ENCODE measurements at regions of chr14 and their contacts with region 1.

Region 1: DNA sequence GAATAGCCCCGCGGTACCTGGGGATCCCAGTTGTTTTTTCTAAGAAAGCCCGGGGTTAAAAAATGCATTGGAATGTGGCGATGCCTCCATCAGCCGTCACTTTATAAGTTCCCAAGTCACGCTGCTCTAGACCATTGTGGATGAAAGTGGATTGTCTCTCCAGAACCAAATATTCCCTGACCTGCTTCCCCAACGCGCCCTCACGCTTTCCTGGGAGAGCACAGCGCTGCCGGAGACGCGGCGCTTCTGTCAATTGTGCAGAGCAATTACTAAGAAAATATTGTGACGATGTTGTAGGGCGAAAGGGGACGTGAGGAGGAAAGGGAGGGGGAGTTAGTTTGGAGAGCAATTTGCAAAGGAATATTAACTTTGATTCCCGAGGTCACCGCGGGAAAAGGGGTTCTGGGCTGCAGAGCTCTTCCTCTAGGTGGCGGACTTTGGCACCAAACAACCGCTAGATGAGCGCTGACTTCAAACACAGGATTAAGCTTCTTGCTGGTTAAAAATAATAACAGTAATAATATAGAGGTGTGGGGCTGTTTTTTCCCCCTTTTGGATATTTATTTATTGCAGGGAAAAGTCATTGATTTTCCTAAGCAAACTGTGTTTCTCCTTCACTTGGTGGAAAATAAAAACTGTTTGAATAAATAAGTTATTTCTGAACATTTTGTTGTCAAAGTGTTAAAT is 9.6 kb upstream of the FOXG1 start:
- DNase-seq: no peak
- ATAC-seq: no peak
- H3K4me3 ChIP-seq: no peak overlapping the region
- H3K27ac ChIP-seq: no peak overlapping the region
- H3K4me1 ChIP-seq: no peaks in the 10 kb centered on the region
- H3K27me3 ChIP-seq: peaks cover 11% of the 10 kb centered on the region

Region 2: GRCh38 chr14:29536886-29537511 is 780.0 kb after region 1 on chr14:
- intact Hi-C with region 1: loop called in 3 of 4 experiments (anchors 5 to 10 kb)
- DNase-seq: no peak
- ATAC-seq: no peak
- H3K4me3 ChIP-seq: no peak overlapping the region
- H3K27ac ChIP-seq: no peak overlapping the region
- H3K4me1 ChIP-seq: no peaks in the 10 kb centered on the region
- H3K27me3 ChIP-seq: no peaks in the 10 kb centered on the region